Dorsolateral prefrontal cortex (tissue), 120 donors: ENCODE measurements at regions of chr11 and their contacts with region 1.

Region 1: DNA sequence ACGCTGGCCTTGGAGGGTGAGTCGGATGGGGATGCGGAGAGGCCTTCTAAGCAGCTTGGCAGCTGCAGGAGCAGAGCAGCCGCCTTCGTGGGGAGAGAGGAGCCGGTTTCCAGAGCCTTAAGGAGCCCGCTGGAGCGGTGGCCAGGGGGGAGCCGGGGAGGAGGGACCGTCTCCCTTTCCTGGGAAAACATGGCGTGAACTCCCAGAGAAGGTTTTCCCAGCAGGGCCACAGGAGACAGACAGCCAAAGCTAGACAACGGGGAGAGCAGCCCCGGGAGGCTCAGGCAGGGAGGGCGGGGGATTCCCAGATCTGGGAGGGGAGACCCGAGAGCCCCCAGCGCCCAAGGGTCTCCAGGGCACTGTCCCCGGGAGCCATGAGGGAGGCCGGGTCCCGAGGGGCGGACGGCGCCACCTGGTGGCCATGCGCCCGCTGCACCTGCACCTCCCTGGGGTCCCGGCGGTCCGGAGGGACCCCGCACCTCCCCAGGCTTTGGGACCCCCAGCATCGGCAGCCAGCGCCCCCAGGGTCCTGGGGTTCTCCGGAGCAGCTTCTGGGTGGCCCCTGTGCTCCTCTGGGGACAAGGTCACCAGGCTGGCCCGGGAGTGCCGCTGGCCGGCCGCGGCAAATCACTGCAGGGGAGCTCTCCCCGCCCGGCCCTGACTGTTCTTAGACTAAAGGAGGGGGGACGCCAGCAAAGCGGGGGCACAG is 2.4 kb upstream of the SYT8 start:
- DNase-seq: peak in 7 of 10 donors; percentile 43 to 81 (median 60)
- H3K4me3 ChIP-seq: peak overlapping the region in 57 of 59 donors; percentile 5 to 62 (median 43)
- H3K27ac ChIP-seq: peak overlapping the region in 13 of 59 donors; percentile 9 to 71 (median 44)
- H3K27me3 ChIP-seq: peaks cover 0 to 13% (median 0%) of the 10 kb centered on the region in 45 donors
- CTCF ChIP-seq: peak; percentile 94 to 100 (median 99)

Region 2: DNA sequence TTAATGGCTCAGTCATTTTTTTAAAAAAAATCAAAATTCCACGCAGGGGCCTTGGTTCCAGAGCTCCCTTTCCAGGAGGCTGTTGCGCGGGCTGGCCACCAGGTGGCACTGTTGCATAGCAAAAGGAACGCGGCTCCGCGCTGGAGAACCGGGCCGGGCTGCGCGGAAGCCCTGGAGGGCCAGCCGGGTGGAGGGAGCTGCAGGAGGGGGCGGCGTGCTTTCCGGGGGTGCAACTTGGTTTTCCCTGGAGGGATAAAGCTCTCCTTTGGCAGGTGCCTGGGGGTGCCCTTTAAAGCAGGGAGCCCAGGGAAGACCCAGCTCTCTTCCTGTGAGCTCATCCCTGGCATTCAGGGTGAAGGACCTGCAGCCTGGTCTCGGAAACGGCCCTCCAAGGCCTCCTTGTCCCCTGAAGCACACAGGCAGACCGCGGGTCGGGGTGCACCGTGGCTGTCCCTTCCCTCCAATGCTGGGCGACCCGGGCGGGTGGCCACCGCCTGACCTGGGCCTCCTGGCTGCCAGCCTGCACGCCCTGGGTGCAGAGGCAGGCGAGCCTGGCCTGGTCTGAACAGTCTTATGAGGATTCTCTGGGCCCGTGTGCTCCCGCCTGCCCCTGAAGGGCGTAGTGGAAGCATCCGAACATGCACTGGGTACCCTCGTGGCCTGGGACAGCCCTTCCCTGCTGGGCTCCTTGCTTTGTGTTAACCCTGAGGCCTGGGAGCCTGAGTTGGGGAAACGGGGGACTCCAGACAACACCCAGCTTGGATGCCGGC is 179.4 kb before region 1 on chr11:
- intact Hi-C with region 1: loop called (anchors 2 to 5 kb)
- DNase-seq: peak; percentile 69 to 89 (median 80)
- H3K4me3 ChIP-seq: peak overlapping the region in 14 of 59 donors; percentile 3 to 36 (median 12)
- H3K27ac ChIP-seq: peak overlapping the region in 2 of 59 donors; percentile 46 to 57
- H3K27me3 ChIP-seq: peaks cover 0 to 20% (median 0%) of the 10 kb centered on the region in 45 donors
- CTCF ChIP-seq: peak; percentile 91 to 99 (median 98)

Region 3: DNA sequence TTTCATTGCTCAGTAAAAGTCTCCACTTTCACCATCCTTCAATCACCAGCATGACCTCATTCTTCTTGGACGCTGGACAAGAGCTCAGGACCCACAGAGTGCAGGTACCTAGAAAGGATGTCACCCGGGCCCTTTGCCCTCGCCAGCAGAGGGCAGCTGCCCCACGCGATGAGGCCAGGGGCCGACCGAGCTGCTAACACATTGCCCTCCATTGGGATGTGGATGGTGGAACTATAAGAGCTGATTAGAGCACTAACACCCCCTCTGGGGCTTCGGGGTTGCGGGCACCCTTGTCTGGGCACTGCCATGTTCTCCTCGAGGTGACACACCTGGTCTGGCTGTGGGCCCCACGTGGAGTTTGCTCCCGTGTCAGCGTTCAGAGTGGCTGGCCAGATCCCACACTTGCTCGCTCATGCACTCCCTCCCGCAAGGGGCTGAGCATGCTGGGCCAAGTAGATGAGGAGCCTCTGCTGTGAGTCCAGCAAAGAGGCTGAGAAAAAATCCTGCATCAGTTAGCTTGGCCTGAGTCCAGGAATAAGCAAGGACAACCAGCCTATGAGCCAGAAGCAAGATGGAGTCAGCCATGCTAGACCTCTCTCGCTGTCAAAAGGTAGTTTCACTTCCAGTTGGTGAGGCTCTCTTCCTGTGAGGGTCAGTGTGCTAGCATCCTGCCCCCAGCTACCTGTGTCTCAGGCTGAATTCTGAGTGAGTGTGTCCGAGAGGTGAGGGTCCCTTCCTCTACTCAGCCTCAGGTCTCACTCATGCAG is 125.5 kb before region 1 on chr11:
- intact Hi-C with region 1: no loop called
- DNase-seq: no peak
- H3K4me3 ChIP-seq: no peak overlapping the region
- H3K27ac ChIP-seq: no peak overlapping the region
- H3K27me3 ChIP-seq: peaks cover 0 to 6% (median 0%) of the 10 kb centered on the region in 45 donors
- CTCF ChIP-seq: peak in 28 of 56 donors; percentile 10 to 41 (median 24)

Region 4: DNA sequence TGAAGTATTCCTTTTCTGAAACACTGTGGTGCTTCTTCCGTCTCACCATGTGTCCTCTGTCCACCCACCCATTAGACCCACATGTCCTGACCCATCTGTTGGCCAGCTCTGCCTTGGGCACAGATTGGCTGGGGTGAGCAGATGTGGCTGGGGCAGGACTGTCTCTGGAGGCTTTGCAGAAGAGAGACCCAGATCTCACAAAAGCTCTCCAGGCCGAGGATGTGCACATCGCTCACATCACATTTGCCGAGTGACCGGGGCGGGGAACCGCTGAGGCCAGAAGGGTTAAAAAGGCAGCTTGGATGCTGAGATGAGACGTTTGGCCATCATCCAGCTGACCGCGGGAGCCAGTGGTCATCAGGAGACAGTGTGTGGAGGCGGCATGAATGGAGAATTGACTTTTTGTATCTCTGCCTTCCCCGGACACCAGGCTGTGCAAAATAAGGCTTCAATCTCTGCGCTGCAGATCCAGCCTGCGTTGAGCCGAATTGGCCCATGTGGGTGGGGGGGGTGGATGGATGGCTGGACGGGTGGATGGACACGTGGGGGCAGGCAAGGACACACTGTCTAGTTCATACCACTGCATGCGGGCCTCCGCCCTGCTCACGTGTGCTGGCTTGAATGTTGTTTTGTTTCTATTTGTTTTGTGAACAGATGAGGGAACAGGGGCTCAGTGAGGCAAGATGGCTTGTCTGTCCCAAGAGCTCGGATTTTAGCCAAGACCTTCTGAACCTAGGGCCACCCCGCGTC is 88.1 kb before region 1 on chr11:
- intact Hi-C with region 1: loop called (anchors 2 to 5 kb)
- DNase-seq: peak in 6 of 10 donors; percentile 57 to 72 (median 68)
- H3K4me3 ChIP-seq: peak overlapping the region in 20 of 59 donors; percentile 2 to 38 (median 10)
- H3K27ac ChIP-seq: peak overlapping the region in 44 of 59 donors; percentile 5 to 93 (median 58)
- H3K27me3 ChIP-seq: no peaks in the 10 kb centered on the region
- CTCF ChIP-seq: peak in 15 of 56 donors; percentile 6 to 28 (median 20)

Region 5: DNA sequence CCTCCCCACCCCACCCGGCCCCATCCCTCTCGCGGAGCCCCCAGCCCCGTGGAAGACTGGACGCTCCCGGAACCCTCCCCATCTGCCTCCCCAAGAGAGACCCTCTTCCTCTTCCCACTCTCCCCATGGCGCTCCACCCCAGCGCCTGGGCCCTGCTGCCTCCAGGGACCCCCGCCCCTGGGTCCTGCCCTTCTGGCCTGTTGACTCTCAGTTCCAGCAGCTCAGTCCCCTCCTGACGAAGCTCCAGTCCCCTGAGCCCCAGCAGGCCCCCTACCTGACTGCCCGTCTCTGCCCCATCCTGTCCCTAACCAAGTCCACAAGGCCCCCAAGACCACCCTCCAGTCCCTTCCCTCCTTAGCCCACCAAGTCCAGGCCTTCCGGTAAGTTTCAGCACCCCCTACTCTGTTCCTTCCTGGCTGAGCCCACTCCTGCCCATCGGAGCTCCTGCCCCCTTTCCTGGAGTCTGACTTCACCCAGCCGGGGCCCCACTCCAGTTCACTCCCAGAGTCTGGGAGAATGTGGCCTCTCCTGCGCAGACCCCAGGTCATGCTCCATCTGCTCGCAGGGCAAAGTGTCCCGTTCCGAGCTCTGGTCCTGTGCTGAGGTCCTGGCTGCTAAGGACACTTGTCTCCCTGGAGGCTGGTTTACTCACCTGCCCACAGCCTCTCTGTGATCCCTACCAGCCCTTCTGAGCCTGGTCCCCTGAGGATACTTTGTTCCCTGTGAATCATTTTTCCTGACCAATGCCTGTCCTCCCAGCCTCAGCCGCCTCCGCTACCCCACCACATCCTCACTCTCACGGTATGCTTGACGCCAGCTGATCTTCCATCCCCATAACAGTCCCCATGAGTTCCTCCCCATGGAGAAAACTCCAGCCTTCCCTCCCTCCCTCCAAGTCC is 82.7 kb before region 1 on chr11:
- intact Hi-C with region 1: loop called (anchors 2 to 5 kb)
- DNase-seq: peak in 5 of 10 donors; percentile 12 to 68 (median 17)
- H3K4me3 ChIP-seq: peak overlapping the region in 58 of 59 donors; percentile 40 to 72 (median 60)
- H3K27ac ChIP-seq: peak overlapping the region in 54 of 59 donors; percentile 4 to 93 (median 80)
- H3K27me3 ChIP-seq: no peaks in the 10 kb centered on the region
- CTCF ChIP-seq: no peak